Caco-2 (cell line): ENCODE measurements at regions of chr13 and their contacts with region 1.

Region 1: GRCh38 chr13:91017031-91017668 is 330.3 kb upstream of the MIR17HG start:
- DNase-seq: peak; percentile 52 to 71
- H3K4me3 ChIP-seq: no peak overlapping the region
- H3K4me3 Mint-ChIP-seq: no peak overlapping the region
- H3K27ac Mint-ChIP-seq: no peak overlapping the region
- H3K4me1 ChIP-seq: no peaks in the 10 kb centered on the region
- H3K4me1 Mint-ChIP-seq: no peaks in the 10 kb centered on the region
- H3K27me3 ChIP-seq: no peaks in the 10 kb centered on the region
- H3K27me3 Mint-ChIP-seq: peaks cover 7% of the 10 kb centered on the region
- CTCF ChIP-seq: peak; percentile 82 to 87

Region 2: GRCh38 chr13:90455823-90456222 is 561.3 kb before region 1 on chr13:
- CTCF ChIA-PET with region 1: interaction called, 3 read pairs
- POLR2A ChIA-PET with region 1: no interaction called
- intact Hi-C with region 1: loop called (anchors 1 kb)
- DNase-seq: peak in 1 of 2 experiments; percentile 15
- H3K4me3 ChIP-seq: no peak overlapping the region
- H3K4me3 Mint-ChIP-seq: no peak overlapping the region
- H3K27ac Mint-ChIP-seq: no peak overlapping the region
- H3K4me1 ChIP-seq: no peaks in the 10 kb centered on the region
- H3K4me1 Mint-ChIP-seq: no peaks in the 10 kb centered on the region
- H3K27me3 ChIP-seq: no peaks in the 10 kb centered on the region
- H3K27me3 Mint-ChIP-seq: no peaks in the 10 kb centered on the region
- CTCF ChIP-seq: peak; percentile 35 to 44

Region 3: DNA sequence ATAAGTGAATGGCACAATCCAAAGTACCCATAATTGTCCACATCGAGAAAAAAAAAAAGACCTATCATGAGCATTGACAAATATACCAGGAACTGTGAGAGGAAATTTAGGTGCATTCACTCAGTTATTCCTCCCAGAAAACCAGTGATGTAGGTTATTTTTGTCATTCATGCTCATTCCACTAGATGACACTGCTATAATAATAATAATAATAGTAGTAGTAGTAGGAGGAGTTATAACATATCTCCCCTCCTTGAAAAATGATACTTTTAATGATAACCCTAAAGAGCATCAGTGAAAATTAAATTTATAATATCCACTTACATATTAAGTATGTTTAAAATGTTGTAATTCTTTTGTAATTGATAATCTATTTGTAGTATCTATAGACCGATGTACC is 133.6 kb before region 1 on chr13:
- CTCF ChIA-PET with region 1: no interaction called
- POLR2A ChIA-PET with region 1: no interaction called
- intact Hi-C with region 1: loop called (anchors 1 kb)
- DNase-seq: no peak
- H3K4me3 ChIP-seq: no peak overlapping the region
- H3K4me3 Mint-ChIP-seq: no peak overlapping the region
- H3K27ac Mint-ChIP-seq: no peak overlapping the region
- H3K4me1 ChIP-seq: no peaks in the 10 kb centered on the region
- H3K4me1 Mint-ChIP-seq: no peaks in the 10 kb centered on the region
- H3K27me3 ChIP-seq: no peaks in the 10 kb centered on the region
- H3K27me3 Mint-ChIP-seq: peaks cover 10% of the 10 kb centered on the region
- CTCF ChIP-seq: no peak

Region 4: GRCh38 chr13:90968166-90968904 is 48.8 kb before region 1 on chr13:
- CTCF ChIA-PET with region 1: no interaction called
- POLR2A ChIA-PET with region 1: no interaction called
- intact Hi-C with region 1: loop called (anchors 1 kb)
- DNase-seq: peak in 1 of 2 experiments; percentile 51
- H3K4me3 ChIP-seq: no peak overlapping the region
- H3K4me3 Mint-ChIP-seq: no peak overlapping the region
- H3K27ac Mint-ChIP-seq: no peak overlapping the region
- H3K4me1 ChIP-seq: no peaks in the 10 kb centered on the region
- H3K4me1 Mint-ChIP-seq: no peaks in the 10 kb centered on the region
- H3K27me3 ChIP-seq: no peaks in the 10 kb centered on the region
- H3K27me3 Mint-ChIP-seq: peaks cover 16% of the 10 kb centered on the region
- CTCF ChIP-seq: peak; percentile 44 to 69

Region 5: DNA sequence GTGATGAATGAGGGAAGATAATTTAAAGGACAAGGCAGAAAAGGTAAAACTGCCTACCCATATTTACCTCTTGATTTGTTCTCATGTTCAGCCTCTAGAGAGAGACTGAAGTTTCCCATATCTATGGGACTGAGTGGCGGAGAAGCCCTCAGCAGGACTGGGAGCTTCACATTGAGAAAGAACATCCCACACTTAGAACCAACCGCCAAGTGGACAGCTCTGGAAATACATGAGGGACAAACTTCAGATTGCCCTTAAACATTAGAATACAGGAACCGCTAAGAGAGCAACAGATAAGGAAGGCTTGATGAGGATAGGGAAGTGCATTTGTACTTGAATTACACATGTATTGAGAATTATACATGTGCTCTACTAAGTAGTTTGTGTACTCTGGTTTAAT is 14.4 kb after region 1 on chr13:
- CTCF ChIA-PET with region 1: no interaction called
- POLR2A ChIA-PET with region 1: no interaction called
- intact Hi-C with region 1: no loop called
- DNase-seq: peak in 1 of 2 experiments; percentile 4
- H3K4me3 ChIP-seq: no peak overlapping the region
- H3K4me3 Mint-ChIP-seq: no peak overlapping the region
- H3K27ac Mint-ChIP-seq: no peak overlapping the region
- H3K4me1 ChIP-seq: no peaks in the 10 kb centered on the region
- H3K4me1 Mint-ChIP-seq: no peaks in the 10 kb centered on the region
- H3K27me3 ChIP-seq: no peaks in the 10 kb centered on the region
- H3K27me3 Mint-ChIP-seq: peaks cover 15% of the 10 kb centered on the region
- CTCF ChIP-seq: no peak

Region 6: DNA sequence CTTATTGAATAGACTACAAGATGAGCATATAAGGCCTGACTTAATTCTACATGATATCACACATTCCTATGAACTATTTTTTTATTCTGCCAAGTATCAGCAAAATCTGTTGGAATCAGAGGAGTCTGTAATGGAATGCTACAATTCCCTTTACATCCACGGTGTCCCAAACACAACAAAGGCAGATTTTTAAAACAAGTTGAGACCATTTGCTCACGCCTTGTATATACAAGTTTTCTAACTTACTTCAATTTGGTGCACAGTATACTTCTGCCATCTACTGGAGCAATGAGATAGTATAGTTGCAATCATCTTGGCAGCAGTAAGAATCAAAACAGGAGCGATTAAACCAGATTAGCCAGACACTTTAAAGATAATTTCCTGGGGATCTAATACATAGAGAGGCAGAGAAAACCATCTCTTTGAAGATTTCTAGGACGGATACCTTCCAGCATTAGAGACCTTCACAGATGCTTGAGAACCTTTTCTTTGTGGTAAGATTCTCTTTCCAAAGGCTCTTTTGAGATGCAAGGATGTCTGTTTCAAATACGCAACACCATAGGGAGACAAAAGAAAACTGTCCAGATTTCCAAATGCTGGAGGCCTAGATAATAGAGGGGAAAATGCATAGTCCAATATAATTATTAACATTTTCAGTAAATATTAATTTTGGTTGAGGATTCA is 28.3 kb after region 1 on chr13:
- CTCF ChIA-PET with region 1: no interaction called
- POLR2A ChIA-PET with region 1: no interaction called
- intact Hi-C with region 1: no loop called
- DNase-seq: peak in 1 of 2 experiments; percentile 20
- H3K4me3 ChIP-seq: no peak overlapping the region
- H3K4me3 Mint-ChIP-seq: no peak overlapping the region
- H3K27ac Mint-ChIP-seq: no peak overlapping the region
- H3K4me1 ChIP-seq: no peaks in the 10 kb centered on the region
- H3K4me1 Mint-ChIP-seq: no peaks in the 10 kb centered on the region
- H3K27me3 ChIP-seq: no peaks in the 10 kb centered on the region
- H3K27me3 Mint-ChIP-seq: no peaks in the 10 kb centered on the region
- CTCF ChIP-seq: peak; percentile 39 to 59